ENCODE measurements at regions of chr9 and their contacts with region 1.

Region 1: GRCh38 chr9:95875305-95876137 is at the start of gene ERCC6L2:
- DNase-seq: peak; percentile 98
- H3K4me3 Mint-ChIP-seq: no peak within 1 kb of the TSS
- H3K27ac Mint-ChIP-seq: no peak within 1 kb of the TSS
- H3K4me1 Mint-ChIP-seq: peaks cover 37% of the 10 kb centered on the region
- H3K27me3 Mint-ChIP-seq: no peaks in the 10 kb centered on the region
- total RNA-seq, gene ERCC6L2: 32.1 and 35.7 TPM in 2 replicates

Region 2: GRCh38 chr9:95605816-95606488 is 269.6 kb before region 1 on chr9:
- intact Hi-C with region 1: no loop called
- DNase-seq: no peak
- H3K4me3 Mint-ChIP-seq: no peak overlapping the region
- H3K27ac Mint-ChIP-seq: no peak overlapping the region
- H3K4me1 Mint-ChIP-seq: no peaks in the 10 kb centered on the region
- H3K27me3 Mint-ChIP-seq: peaks cover 4% of the 10 kb centered on the region

Region 3: GRCh38 chr9:95852059-95853032 is 23.2 kb before region 1 on chr9:
- intact Hi-C with region 1: loop called (anchors 1 kb)
- DNase-seq: peak; percentile 69
- H3K4me3 Mint-ChIP-seq: peak overlapping the region; percentile 56
- H3K27ac Mint-ChIP-seq: peak overlapping the region; percentile 69
- H3K4me1 Mint-ChIP-seq: peaks cover 21% of the 10 kb centered on the region
- H3K27me3 Mint-ChIP-seq: no peaks in the 10 kb centered on the region

Region 4: GRCh38 chr9:95887926-95888497 is 12.5 kb after region 1 on chr9:
- intact Hi-C with region 1: no loop called
- DNase-seq: no peak
- H3K4me3 Mint-ChIP-seq: peak overlapping the region; percentile 48
- H3K27ac Mint-ChIP-seq: peak overlapping the region; percentile 54
- H3K4me1 Mint-ChIP-seq: peaks cover 42% of the 10 kb centered on the region
- H3K27me3 Mint-ChIP-seq: no peaks in the 10 kb centered on the region

Region 5: DNA sequence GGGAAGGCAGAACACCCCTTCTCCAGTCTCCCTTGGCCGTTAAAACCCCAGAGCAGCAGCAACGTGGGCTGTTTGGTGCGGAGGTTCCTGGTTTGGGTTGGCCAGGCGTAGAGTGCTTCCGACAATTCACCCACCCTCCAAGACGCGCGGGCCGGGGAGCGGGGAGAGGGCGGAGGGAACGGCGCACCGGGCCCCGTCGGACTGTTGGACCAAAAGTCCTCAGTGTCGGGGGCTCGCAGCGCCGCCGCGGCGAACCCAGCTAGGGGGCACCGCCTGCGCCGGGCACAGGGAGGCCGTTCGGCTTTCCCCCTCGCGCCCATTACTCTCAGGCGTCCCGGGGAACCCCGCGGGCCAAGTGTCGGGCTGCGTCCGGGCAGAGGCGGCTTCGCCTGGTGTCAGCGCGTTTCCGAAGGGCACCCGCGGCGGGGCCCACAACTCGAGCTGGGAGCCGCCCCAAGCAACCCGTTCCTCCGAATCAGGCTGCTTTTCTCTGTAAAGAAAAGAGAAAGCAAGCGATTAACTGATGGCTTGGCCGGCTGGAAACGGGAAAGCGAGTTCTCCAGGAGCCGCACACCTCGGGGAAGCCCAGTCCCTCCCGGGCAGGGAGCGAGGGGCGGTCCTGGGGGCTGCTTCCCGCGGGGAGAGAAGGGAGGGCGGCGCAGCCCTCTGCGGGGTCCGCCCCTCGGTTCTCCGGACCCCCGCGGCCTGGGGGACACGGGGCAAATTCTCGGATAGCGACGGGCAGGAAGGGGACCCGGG is 145.4 kb after region 1 on chr9:
- intact Hi-C with region 1: loop called (anchors 1 kb)
- DNase-seq: peak; percentile 91
- H3K4me3 Mint-ChIP-seq: peak overlapping the region; percentile 84
- H3K27ac Mint-ChIP-seq: peak overlapping the region; percentile 96
- H3K4me1 Mint-ChIP-seq: peaks cover 72% of the 10 kb centered on the region
- H3K27me3 Mint-ChIP-seq: peaks cover 12% of the 10 kb centered on the region